CD4-positive, alpha-beta T cell (primary cell): ENCODE measurements at regions of chr16 and their contacts with region 1.

Region 1: DNA sequence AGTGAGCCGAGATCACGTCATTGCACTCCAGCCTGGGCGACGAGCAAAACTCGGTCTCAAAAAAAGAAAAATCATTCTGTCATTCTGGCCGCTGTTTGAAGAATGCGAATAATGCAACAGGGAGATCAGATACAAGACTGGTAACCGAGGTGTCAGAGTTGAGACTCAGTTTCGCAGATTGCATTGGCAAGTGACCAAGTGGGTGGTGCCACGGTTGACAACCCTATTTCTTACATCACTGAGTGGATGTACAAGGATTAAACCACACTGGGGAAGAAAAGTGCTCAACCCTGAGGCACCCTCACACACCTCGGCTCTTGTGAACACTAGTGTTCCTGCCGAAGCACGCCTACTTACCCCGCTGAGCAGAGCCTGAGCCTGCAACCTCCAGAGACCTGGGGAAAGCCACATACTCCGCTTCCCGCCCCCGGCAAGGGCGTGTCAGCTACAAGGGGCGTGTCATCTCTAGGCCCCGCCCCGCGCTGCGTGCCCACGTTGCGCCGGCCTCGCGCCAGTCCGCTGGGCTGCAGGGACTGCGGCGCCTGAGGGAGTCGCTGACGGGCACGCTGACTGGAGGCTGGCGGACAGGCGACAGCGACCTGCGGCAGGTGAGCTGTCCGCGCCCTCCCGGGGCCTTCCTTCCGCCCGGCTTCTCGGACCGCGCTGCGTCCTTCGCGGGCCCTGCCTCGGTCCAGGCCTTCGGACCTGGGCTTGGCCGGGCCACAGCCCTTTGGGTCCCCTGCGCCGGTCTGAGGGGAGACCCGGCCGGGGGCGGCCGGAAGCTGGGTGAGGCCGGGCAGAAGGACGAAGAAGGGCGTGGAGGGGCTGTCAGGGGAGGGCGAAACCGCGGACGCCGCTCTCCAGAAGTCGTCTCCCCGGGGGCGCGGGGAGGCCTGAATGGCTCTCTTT is at the start of gene HMOX2:
- DNase-seq: peak; percentile 86 to 97 (median 92)
- ATAC-seq: peak; percentile 85
- H3K4me3 ChIP-seq: peak within 1 kb of the TSS; percentile 98
- H3K4me3 Mint-ChIP-seq: peak within 1 kb of the TSS; percentile 92
- H3K27ac ChIP-seq: peak within 1 kb of the TSS; percentile 67 to 80
- H3K27ac Mint-ChIP-seq: peak within 1 kb of the TSS; percentile 78
- H3K4me1 ChIP-seq: peaks cover 68% of the 10 kb centered on the region
- H3K4me1 Mint-ChIP-seq: peaks cover 47% of the 10 kb centered on the region
- H3K27me3 ChIP-seq: no peaks in the 10 kb centered on the region
- H3K27me3 Mint-ChIP-seq: no peaks in the 10 kb centered on the region
- CTCF ChIP-seq: peak; percentile 40
- total RNA-seq, gene HMOX2: 63.4 to 66.4 TPM

Region 2: DNA sequence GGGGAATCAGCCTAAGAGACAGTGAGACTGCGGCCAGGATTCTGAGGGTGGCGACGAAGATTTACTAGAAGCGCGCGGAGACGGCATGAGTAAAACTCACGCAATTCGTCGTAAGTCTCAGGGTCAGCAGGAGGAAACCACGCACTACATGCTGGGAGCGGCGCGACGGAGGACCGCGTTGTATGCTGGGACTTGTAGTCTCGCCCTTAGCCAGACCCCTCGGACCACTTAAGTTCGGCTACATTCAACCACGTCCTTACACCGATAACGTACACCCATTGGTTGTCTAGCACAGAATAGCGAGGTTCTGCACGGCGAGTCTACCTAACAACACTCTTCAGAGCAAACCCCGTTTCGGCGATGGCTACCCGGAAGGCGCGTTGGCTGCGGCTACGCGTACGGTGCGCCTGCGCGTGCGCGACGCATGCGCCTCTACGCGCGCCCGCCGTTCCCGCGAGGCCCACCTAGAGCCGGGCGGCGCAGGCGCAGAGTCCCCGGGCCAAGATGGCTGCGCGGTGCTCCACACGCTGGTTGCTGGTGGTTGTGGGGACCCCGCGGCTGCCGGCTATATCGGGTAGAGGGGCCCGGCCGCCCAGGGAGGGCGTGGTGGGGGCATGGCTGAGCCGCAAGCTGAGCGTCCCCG is 50.6 kb before region 1 on chr16 and contains the start of gene DNAJA3:
- CTCF ChIA-PET with region 1: no interaction called
- POLR2A ChIA-PET with region 1: no interaction called
- intact Hi-C with region 1: loop called in 1 of 2 experiments (anchors 2 kb)
- DNase-seq: peak; percentile 82 to 98 (median 90)
- ATAC-seq: peak; percentile 84
- H3K4me3 ChIP-seq: peak within 1 kb of the TSS; percentile 71
- H3K4me3 Mint-ChIP-seq: peak within 1 kb of the TSS; percentile 91
- H3K27ac ChIP-seq: peak within 1 kb of the TSS; percentile 93 to 99
- H3K27ac Mint-ChIP-seq: peak within 1 kb of the TSS; percentile 99
- H3K4me1 ChIP-seq: peaks cover 34% of the 10 kb centered on the region
- H3K4me1 Mint-ChIP-seq: peaks cover 27% of the 10 kb centered on the region
- H3K27me3 ChIP-seq: no peaks in the 10 kb centered on the region
- H3K27me3 Mint-ChIP-seq: no peaks in the 10 kb centered on the region
- CTCF ChIP-seq: no peak
- total RNA-seq, gene DNAJA3: 17.2 to 18.8 TPM

Region 3: GRCh38 chr16:4442371-4442770 is 33.8 kb before region 1 on chr16:
- CTCF ChIA-PET with region 1: no interaction called
- POLR2A ChIA-PET with region 1: no interaction called
- intact Hi-C with region 1: no loop called
- DNase-seq: no peak
- ATAC-seq: no peak
- H3K4me3 ChIP-seq: no peak overlapping the region
- H3K4me3 Mint-ChIP-seq: no peak overlapping the region
- H3K27ac ChIP-seq: no peak overlapping the region
- H3K27ac Mint-ChIP-seq: no peak overlapping the region
- H3K4me1 ChIP-seq: no peaks in the 10 kb centered on the region
- H3K4me1 Mint-ChIP-seq: no peaks in the 10 kb centered on the region
- H3K27me3 ChIP-seq: no peaks in the 10 kb centered on the region
- H3K27me3 Mint-ChIP-seq: no peaks in the 10 kb centered on the region
- CTCF ChIP-seq: no peak

Region 4: GRCh38 chr16:4487955-4488498 is 11.9 kb after region 1 on chr16:
- CTCF ChIA-PET with region 1: interaction called, 12 read pairs
- POLR2A ChIA-PET with region 1: interaction called, 83 read pairs
- intact Hi-C with region 1: loop called in 1 of 2 experiments (anchors 1 kb)
- DNase-seq: peak in 2 of 14 experiments; percentile 54 to 56
- ATAC-seq: peak; percentile 45
- H3K4me3 ChIP-seq: peak overlapping the region; percentile 7
- H3K4me3 Mint-ChIP-seq: peak overlapping the region; percentile 73
- H3K27ac ChIP-seq: peak overlapping the region; percentile 37 to 73
- H3K27ac Mint-ChIP-seq: peak overlapping the region; percentile 91
- H3K4me1 ChIP-seq: peaks cover 71% of the 10 kb centered on the region
- H3K4me1 Mint-ChIP-seq: peaks cover 60% of the 10 kb centered on the region
- H3K27me3 ChIP-seq: no peaks in the 10 kb centered on the region
- H3K27me3 Mint-ChIP-seq: no peaks in the 10 kb centered on the region
- CTCF ChIP-seq: no peak

Region 5: DNA sequence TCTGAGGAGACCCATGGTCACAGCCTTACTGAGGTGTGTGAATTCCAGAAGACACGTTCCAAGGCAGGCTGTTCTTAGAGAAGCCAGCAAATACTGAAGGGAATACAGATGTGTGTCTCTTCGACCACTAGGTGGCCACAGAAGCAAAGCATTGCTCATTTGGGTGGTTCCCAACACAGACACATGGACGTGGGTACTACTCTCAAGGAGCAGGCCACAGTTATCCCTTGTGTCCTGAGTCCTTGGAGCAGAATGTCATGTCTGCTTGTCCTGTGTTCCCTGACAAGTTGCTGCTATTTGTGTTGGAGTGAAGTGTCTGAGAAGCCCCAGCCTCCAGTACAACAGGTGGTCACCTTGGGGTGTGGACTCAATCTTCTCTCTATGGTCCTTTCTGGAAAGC is 30.3 kb after region 1 on chr16:
- CTCF ChIA-PET with region 1: interaction called, 70 read pairs
- POLR2A ChIA-PET with region 1: interaction called, 140 read pairs
- intact Hi-C with region 1: loop called (anchors 1 kb)
- DNase-seq: peak; percentile 37 to 87 (median 48)
- ATAC-seq: peak; percentile 30
- H3K4me3 ChIP-seq: no peak overlapping the region
- H3K4me3 Mint-ChIP-seq: peak overlapping the region; percentile 82
- H3K27ac ChIP-seq: peak overlapping the region; percentile 78 to 84
- H3K27ac Mint-ChIP-seq: peak overlapping the region; percentile 97
- H3K4me1 ChIP-seq: peaks cover 72% of the 10 kb centered on the region
- H3K4me1 Mint-ChIP-seq: peaks cover 65% of the 10 kb centered on the region
- H3K27me3 ChIP-seq: no peaks in the 10 kb centered on the region
- H3K27me3 Mint-ChIP-seq: no peaks in the 10 kb centered on the region
- CTCF ChIP-seq: peak; percentile 86

Region 6: DNA sequence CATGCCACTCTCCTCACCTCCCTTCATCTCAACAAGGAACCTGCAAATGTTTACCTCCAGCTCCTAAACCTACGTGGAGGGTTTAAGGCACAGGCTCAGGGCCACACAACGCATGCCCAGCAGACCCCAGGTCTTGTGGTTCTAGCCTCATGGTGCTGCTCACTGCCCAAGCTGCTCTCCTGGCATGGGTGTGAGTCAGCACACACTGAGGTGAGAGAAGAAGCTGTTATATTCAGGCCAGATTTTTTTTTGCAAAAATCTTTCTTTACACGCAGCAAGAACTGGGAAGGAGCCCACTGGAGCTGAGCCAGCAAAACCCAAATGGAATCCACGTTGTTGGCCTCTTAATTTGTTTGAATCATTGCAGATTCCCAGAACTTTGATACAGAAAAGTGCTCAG is 74.5 kb after region 1 on chr16:
- CTCF ChIA-PET with region 1: interaction called, 17 read pairs
- POLR2A ChIA-PET with region 1: interaction called, 5 read pairs
- intact Hi-C with region 1: loop called (anchors 1 to 2 kb)
- DNase-seq: no peak
- ATAC-seq: no peak
- H3K4me3 ChIP-seq: no peak overlapping the region
- H3K4me3 Mint-ChIP-seq: no peak overlapping the region
- H3K27ac ChIP-seq: no peak overlapping the region
- H3K27ac Mint-ChIP-seq: no peak overlapping the region
- H3K4me1 ChIP-seq: peaks cover 10% of the 10 kb centered on the region
- H3K4me1 Mint-ChIP-seq: peaks cover 5% of the 10 kb centered on the region
- H3K27me3 ChIP-seq: no peaks in the 10 kb centered on the region
- H3K27me3 Mint-ChIP-seq: no peaks in the 10 kb centered on the region
- CTCF ChIP-seq: no peak

Region 7: GRCh38 chr16:4846891-4847773 is 371.0 kb after region 1 on chr16 and contains the starts of genes GLYR1 and UBN1:
- CTCF ChIA-PET with region 1: no interaction called
- POLR2A ChIA-PET with region 1: no interaction called
- intact Hi-C with region 1: no loop called
- DNase-seq: peak; percentile 98 to 100 (median 99)
- ATAC-seq: peak; percentile 90
- H3K4me3 ChIP-seq: peak within 1 kb of the TSS; percentile 95
- H3K4me3 Mint-ChIP-seq: peak within 1 kb of the TSS; percentile 93
- H3K27ac ChIP-seq: peak within 1 kb of the TSS; percentile 75 to 93
- H3K27ac Mint-ChIP-seq: peak within 1 kb of the TSS; percentile 85
- H3K4me1 ChIP-seq: peaks cover 46% of the 10 kb centered on the region
- H3K4me1 Mint-ChIP-seq: peaks cover 57% of the 10 kb centered on the region
- H3K27me3 ChIP-seq: no peaks in the 10 kb centered on the region
- H3K27me3 Mint-ChIP-seq: no peaks in the 10 kb centered on the region
- CTCF ChIP-seq: no peak
- total RNA-seq, gene GLYR1: 71.7 to 77.2 TPM
- total RNA-seq, gene UBN1: 45.7 to 45.8 TPM